Posterior cingulate gyrus (tissue), 11 donors: ENCODE measurements at regions of chr3 and their contacts with region 1.

Region 1: DNA sequence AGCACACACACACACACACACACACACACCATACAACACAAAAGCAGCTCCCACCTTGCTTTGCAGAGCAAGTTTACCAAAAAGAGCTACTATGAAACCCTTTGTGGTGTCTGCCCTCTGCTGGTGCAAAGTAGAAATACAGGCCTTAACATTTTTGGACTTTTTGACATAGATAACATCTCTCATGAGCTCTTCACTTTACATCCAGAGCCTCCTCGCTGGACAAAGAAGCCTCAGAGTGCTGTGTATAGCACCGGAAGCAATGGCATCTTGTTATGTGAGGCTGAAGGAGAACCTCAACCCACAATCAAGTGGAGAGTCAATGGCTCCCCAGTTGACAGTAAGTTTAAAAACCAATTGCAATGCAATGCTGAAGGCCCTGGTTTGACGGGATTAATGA is 157.9 kb downstream of the CHL1 start:
- DNase-seq: peak in 4 of 10 donors; percentile 18 to 52 (median 32)

Region 2: GRCh38 chr3:197828-198491 is 156.5 kb before region 1 on chr3:
- intact Hi-C with region 1: loop called (anchors 5 kb)
- DNase-seq: peak in 9 of 10 donors; percentile 14 to 94 (median 55)